ENCODE measurements at regions of chr2 and their contacts with region 1.

Region 1: GRCh38 chr2:230902180-230902899 is 22.7 kb downstream of the GPR55 start:
- DNase-seq: peak; percentile 77
- CTCF ChIP-seq: peak; percentile 98

Region 2: DNA sequence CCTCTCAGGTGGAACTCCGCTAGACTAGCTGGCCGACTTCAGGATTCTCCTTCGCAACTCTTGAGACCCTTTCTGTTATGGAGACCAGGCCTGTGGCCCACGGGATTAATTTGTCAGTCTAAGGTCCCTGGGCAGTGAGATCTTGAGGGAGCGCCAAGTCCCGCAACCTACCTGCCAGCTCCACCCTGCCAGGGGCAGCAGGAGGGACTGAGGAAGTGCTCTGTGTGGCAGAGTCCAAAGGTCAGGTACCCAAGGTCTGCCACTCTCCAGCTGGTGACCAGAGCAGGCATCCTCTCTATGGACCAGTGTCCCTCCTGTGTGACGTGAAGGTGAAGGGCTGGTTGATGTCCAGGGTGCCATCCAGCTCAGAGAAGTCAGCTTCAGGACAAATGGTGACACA is 89.3 kb after region 1 on chr2:
- in situ Hi-C with region 1: loop called (anchors 5 kb)
- DNase-seq: no peak
- CTCF ChIP-seq: no peak

Region 3: DNA sequence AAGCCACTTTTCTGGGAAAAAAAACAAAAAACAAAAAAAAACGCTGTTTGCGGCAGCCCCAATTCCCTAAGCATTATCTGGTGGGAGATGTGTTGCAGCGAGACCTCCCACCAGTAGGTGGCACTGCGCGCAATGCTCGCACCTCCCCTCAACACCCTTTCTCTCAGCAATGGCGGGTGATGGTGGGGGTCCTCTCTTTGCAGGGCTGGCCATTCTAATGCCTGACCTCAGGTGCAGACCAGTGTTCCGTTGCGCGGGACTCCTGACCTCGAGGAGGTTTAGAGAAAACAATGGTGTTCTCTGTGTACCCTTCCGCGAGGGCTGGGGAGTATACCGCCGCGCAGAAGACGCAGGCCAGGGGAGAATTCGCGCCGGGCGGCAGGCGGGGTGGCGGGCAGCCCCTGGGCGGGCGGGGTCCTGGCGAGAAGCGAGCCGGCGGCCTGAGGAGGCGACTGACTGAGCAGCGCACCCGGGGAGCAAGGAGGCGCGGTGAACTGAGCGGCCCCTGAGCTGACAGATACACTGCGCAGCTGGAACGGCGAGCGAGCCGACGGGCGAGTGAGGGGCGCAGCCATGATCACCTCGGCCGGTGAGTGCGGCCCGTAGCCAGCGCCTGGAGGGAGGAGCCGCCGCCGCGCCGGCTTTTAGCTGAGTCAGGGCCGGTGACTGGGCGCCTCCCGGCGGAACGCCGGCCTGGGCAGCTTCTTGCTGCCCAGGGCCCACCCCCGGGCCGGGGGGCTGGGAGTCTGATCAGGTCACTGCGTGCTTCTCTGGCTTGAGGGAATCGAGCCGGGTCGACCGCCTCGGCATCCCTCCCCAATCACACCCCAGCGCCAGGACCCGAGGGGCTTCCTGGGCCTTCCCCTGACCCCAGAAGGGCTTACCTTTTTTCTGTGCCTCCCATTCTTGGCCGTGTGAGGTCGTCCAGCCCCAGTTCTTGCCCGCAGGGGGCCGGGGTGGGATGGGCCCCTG is 154.4 kb after region 1 on chr2 and contains the start of gene PSMD1:
- in situ Hi-C with region 1: loop called (anchors 10 kb)
- DNase-seq: peak; percentile 95
- CTCF ChIP-seq: peak; percentile 93

Measured in GM13977 (cell line).